PC-9 (cell line): ENCODE measurements at regions of chr2 and their contacts with region 1.

Region 1: DNA sequence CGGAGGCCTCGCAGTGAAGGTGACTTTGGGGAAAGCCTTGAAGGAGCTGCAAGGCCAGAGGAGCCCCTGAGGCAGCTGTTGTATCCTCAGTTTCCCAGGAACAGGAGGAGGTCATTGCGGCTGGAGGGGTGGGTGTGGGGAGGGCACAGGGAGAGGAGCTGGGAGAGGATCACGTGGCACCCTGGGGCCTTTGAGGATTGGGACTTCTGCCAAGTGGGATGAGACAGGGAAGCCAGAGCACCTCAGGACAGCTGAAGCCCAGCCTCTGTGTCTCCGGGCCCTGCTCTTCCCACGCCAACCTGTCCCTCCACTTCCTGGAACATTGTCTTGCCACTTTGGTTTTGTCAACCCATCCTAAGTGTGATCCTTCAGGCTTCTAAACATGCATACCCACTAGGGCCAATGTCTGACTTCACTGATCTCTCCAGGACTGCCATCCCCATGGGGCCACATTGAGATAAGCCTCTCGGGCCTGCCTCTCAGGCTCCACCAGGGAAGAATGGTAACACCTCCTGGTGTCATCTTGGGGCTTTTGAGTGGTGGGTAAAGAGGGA is 19.3 kb upstream of the RRM2 start:
- DNase-seq: no peak
- H3K4me3 ChIP-seq: no peak overlapping the region
- H3K27ac ChIP-seq: no peak overlapping the region
- H3K4me1 ChIP-seq: no peaks in the 10 kb centered on the region
- H3K27me3 ChIP-seq: no peaks in the 10 kb centered on the region
- CTCF ChIP-seq: no peak

Region 2: DNA sequence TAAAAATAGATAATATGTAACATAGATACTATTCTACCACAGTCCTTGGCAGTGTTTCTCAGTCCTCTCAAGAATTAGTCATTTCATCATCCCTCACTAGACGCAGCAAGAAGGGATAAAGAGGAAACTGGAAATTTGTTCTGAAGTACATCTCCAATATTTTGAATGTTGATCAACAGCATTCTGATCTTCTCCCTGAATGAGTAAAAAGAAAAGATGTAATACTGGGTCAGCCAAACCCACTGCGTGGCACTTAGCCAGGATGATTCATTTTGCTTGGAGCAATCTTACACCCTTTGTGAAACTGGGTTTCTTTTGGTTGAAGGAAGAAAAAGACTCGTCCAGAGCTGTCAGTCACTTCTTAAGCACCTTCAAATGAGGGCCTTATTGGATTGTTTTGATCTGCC is 205.9 kb before region 1 on chr2:
- CTCF ChIA-PET with region 1: no interaction called
- POLR2A ChIA-PET with region 1: no interaction called
- intact Hi-C with region 1: no loop called
- DNase-seq: peak; percentile 90 to 99
- H3K4me3 ChIP-seq: no peak overlapping the region
- H3K27ac ChIP-seq: peak overlapping the region; percentile 95
- H3K4me1 ChIP-seq: peaks cover 54% of the 10 kb centered on the region
- H3K27me3 ChIP-seq: no peaks in the 10 kb centered on the region
- CTCF ChIP-seq: no peak

Region 3: GRCh38 chr2:10091182-10091888 is 11.9 kb before region 1 on chr2:
- CTCF ChIA-PET with region 1: no interaction called
- POLR2A ChIA-PET with region 1: interaction called, 13 read pairs
- intact Hi-C with region 1: no loop called
- DNase-seq: no peak
- H3K4me3 ChIP-seq: no peak overlapping the region
- H3K27ac ChIP-seq: no peak overlapping the region
- H3K4me1 ChIP-seq: no peaks in the 10 kb centered on the region
- H3K27me3 ChIP-seq: no peaks in the 10 kb centered on the region
- CTCF ChIP-seq: no peak

Region 4: GRCh38 chr2:10163498-10164486 is 60.5 kb after region 1 on chr2:
- CTCF ChIA-PET with region 1: interaction called, 15 read pairs
- POLR2A ChIA-PET with region 1: no interaction called
- intact Hi-C with region 1: no loop called
- DNase-seq: no peak
- H3K4me3 ChIP-seq: no peak overlapping the region
- H3K27ac ChIP-seq: no peak overlapping the region
- H3K4me1 ChIP-seq: no peaks in the 10 kb centered on the region
- H3K27me3 ChIP-seq: no peaks in the 10 kb centered on the region
- CTCF ChIP-seq: no peak

Region 5: DNA sequence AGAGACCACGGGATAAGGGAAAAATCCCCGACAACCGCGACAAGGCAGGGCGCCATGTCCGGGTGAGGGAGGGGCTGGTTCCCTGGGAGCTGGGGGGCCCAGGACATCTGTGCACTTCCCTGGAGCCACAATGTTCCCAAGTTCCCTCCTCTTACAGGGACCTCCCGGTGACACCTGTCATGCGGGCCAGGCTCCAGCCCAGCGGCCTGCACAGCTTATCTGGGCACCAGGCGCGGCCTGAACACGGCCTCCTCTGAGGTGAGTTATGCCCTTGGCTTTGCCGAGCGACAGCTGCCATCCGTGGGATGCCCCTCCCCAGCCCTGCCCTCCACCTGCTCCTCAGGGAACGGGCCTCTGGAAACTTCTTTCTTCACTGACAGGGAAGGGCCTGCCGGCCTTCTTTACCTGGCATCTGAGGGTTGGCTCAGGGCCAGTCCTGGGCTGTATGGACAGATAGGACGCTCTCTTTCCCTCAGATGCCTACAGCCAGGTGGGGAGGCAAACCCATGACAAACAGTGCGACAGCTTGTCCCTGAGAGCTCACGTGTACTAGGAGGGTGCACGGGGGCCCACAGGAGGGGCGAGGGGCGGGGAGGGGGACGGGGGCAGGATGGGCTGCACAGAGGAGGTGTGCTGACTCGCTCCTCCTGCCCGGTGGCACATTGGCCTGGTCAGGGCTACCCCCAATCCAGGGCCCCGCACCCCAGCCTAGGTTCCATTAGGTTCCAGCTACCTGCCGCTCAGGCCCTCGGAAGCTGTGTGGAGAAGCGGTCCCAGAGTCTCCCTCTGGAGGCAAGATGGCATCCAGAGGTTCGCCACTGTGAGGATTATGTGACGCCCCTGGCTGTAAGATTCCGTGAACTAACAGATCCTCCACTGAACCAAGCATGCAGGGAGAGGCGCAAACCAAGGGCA is 164.6 kb after region 1 on chr2:
- CTCF ChIA-PET with region 1: no interaction called
- POLR2A ChIA-PET with region 1: no interaction called
- intact Hi-C with region 1: no loop called
- DNase-seq: no peak
- H3K4me3 ChIP-seq: no peak overlapping the region
- H3K27ac ChIP-seq: no peak overlapping the region
- H3K4me1 ChIP-seq: peaks cover 22% of the 10 kb centered on the region
- H3K27me3 ChIP-seq: no peaks in the 10 kb centered on the region
- CTCF ChIP-seq: no peak

Region 6: GRCh38 chr2:10883801-10884478 is 780.7 kb after region 1 on chr2:
- CTCF ChIA-PET with region 1: no interaction called
- POLR2A ChIA-PET with region 1: no interaction called
- intact Hi-C with region 1: no loop called
- DNase-seq: peak in 1 of 2 experiments; percentile 17
- H3K4me3 ChIP-seq: no peak overlapping the region
- H3K27ac ChIP-seq: no peak overlapping the region
- H3K4me1 ChIP-seq: no peaks in the 10 kb centered on the region
- H3K27me3 ChIP-seq: no peaks in the 10 kb centered on the region
- CTCF ChIP-seq: no peak